ENCODE measurements at regions of chr12 and their contacts with region 1.

Region 1: DNA sequence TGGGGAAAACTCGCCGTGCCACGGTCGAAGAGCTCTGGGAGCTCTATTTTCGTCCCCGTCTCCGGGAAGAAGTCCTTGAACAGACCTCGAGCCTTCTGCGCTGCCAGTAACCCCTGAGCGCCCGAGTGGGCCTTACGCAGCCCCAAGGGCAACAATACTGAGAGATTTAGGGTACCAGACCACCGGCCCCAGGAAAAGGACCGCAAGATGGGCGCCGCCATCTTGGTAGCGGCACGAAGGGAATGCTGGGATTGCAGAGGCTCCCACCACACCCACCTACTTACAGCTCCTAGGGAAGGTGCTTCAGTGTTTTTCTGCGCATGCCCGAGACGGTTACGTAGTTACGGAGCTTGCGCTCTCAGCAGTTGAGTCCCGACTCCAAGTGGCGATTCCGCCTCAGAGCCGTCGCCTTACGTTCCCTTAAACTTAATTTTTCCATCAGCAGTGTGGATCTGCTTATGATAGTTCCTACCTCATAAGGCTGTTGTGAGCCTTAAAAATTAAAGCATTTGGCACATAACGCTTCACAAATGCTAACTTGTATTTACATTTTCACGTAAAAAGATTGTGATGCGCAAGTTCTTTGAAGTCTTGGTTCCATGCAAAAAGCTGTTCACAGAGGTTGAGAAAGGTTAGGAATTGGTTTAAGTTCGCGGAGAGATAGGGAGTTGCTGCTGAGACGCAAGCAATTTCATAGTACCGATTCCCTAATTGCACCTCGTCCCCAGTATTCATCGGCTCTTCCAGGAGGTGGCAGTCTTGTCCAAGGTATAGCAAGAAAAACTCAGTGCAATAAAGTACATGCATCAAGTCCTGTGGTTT is at the start of gene YARS2:
- DNase-seq: peak; percentile 83 to 88 (median 86)
- H3K4me3 ChIP-seq: peak within 1 kb of the TSS; percentile 76 to 93
- H3K4me3 Mint-ChIP-seq: peak within 1 kb of the TSS; percentile 87 to 95 (median 95)
- H3K27ac ChIP-seq: peak within 1 kb of the TSS; percentile 78
- H3K27ac Mint-ChIP-seq: peak within 1 kb of the TSS; percentile 83 to 97 (median 95)
- H3K4me1 ChIP-seq: peaks cover 16% of the 10 kb centered on the region
- H3K4me1 Mint-ChIP-seq: peaks cover 11 to 22% (median 17%) of the 10 kb centered on the region in 4 donors
- H3K27me3 ChIP-seq: no peaks in the 10 kb centered on the region
- H3K27me3 Mint-ChIP-seq: peaks cover 0 to 2% of the 10 kb centered on the region in 2 donors
- total RNA-seq, gene YARS2: 18.9 to 19.0 TPM

Region 2: GRCh38 chr12:31325877-31326631 is 1429.8 kb before region 1 on chr12 and contains the start of gene SINHCAF:
- CTCF ChIA-PET with region 1: no interaction called
- POLR2A ChIA-PET with region 1: interaction called, 6 read pairs
- intact Hi-C with region 1: loop called (anchors 5 kb)
- DNase-seq: peak; percentile 97 to 99 (median 98)
- H3K4me3 ChIP-seq: peak within 1 kb of the TSS; percentile 88 to 89
- H3K4me3 Mint-ChIP-seq: peak within 1 kb of the TSS; percentile 88 to 99 (median 97)
- H3K27ac ChIP-seq: peak within 1 kb of the TSS; percentile 87
- H3K27ac Mint-ChIP-seq: peak within 1 kb of the TSS; percentile 93 to 99 (median 98)
- H3K4me1 ChIP-seq: peaks cover 25% of the 10 kb centered on the region
- H3K4me1 Mint-ChIP-seq: peaks cover 21 to 44% (median 27%) of the 10 kb centered on the region in 4 donors
- H3K27me3 ChIP-seq: no peaks in the 10 kb centered on the region
- H3K27me3 Mint-ChIP-seq: peaks cover 0 to 2% of the 10 kb centered on the region in 2 donors
- total RNA-seq, gene SINHCAF: 95.8 to 98.5 TPM

Region 3: GRCh38 chr12:31650927-31651326 is 1104.9 kb before region 1 on chr12:
- CTCF ChIA-PET with region 1: interaction called, 38 read pairs
- POLR2A ChIA-PET with region 1: interaction called, 14 read pairs
- intact Hi-C with region 1: loop called (anchors 2 kb)
- DNase-seq: no peak
- H3K4me3 ChIP-seq: no peak overlapping the region
- H3K4me3 Mint-ChIP-seq: no peak overlapping the region
- H3K27ac ChIP-seq: no peak overlapping the region
- H3K27ac Mint-ChIP-seq: no peak overlapping the region
- H3K4me1 ChIP-seq: peaks cover 12% of the 10 kb centered on the region
- H3K4me1 Mint-ChIP-seq: peaks cover 6 to 12% (median 7%) of the 10 kb centered on the region in 4 donors
- H3K27me3 ChIP-seq: no peaks in the 10 kb centered on the region
- H3K27me3 Mint-ChIP-seq: peaks cover 0 to 2% of the 10 kb centered on the region in 2 donors

Region 4: DNA sequence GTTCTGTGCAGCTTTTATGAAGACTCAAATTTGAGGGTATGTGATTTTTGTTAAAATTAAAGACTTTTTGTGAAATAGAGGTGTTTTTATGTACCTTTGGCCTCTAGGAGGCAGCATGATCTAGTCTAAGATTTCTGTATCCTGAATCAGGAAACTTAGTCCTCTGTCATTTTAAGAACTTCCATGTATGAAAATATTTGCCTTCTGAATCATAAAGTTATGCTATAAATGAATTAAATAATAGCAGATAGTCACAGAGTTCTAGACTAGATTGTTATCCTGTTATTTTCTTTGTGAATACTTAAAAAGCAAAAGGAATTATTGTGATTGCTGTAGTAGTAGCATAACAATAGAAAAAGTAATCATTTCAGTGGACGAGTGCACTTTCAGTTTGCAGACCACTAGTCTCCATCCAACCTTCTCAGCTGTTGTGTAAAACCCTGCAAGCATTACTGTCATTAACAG is 300.2 kb before region 1 on chr12:
- CTCF ChIA-PET with region 1: interaction called, 13 read pairs
- POLR2A ChIA-PET with region 1: no interaction called
- intact Hi-C with region 1: loop called (anchors 5 kb)
- DNase-seq: peak in 4 of 5 donors; percentile 17 to 29 (median 28)
- H3K4me3 ChIP-seq: no peak overlapping the region
- H3K4me3 Mint-ChIP-seq: peak overlapping the region in 6 of 8 donors; percentile 15 to 49 (median 25)
- H3K27ac ChIP-seq: no peak overlapping the region
- H3K27ac Mint-ChIP-seq: no peak overlapping the region
- H3K4me1 ChIP-seq: no peaks in the 10 kb centered on the region
- H3K4me1 Mint-ChIP-seq: peaks cover 0 to 5% (median 2%) of the 10 kb centered on the region in 4 donors
- H3K27me3 ChIP-seq: no peaks in the 10 kb centered on the region
- H3K27me3 Mint-ChIP-seq: peaks cover 0 to 4% of the 10 kb centered on the region in 2 donors

Region 5: GRCh38 chr12:32734952-32735351 is 20.9 kb before region 1 on chr12:
- CTCF ChIA-PET with region 1: interaction called, 11 read pairs
- POLR2A ChIA-PET with region 1: interaction called, 3 read pairs
- intact Hi-C with region 1: no loop called
- DNase-seq: no peak
- H3K4me3 ChIP-seq: no peak overlapping the region
- H3K4me3 Mint-ChIP-seq: no peak overlapping the region
- H3K27ac ChIP-seq: no peak overlapping the region
- H3K27ac Mint-ChIP-seq: peak overlapping the region in 4 of 7 donors; percentile 0 to 69 (median 6)
- H3K4me1 ChIP-seq: no peaks in the 10 kb centered on the region
- H3K4me1 Mint-ChIP-seq: peaks cover 0 to 5% (median 2%) of the 10 kb centered on the region in 4 donors
- H3K27me3 ChIP-seq: no peaks in the 10 kb centered on the region
- H3K27me3 Mint-ChIP-seq: no peaks in the 10 kb centered on the region

Region 6: DNA sequence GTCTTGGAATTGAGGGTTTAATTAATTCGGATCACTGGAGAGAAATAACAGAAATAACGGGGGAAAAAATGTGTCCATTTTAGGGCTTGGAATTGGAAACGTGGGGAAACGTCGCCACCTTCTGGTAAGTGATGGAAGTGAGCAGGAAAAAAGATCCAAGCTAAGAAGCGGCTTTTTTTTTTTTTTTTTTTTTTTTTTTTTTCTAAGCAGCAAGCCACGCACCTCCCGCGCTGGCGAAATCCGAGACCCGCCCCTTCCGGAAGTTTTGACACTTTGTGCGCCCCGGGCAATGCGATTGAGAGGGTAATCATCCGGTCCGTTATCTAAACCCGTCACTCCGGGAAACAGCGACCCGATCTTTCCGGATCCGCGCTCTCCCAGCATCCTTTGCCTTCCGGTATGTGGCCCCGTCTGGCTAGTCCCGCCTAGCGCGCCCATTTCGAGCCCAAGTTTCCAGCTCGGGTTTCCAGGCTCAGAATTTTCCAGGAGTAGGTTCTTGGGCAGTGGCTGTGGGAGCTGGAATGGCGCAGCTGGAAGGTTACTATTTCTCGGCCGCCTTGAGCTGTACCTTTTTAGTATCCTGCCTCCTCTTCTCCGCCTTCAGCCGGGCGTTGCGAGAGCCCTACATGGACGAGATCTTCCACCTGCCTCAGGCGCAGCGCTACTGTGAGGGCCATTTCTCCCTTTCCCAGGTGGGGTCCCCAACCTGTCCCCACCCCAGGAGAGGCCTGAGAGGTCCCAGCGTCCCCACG is 1266.4 kb after region 1 on chr12 and contains the start of gene ALG10:
- CTCF ChIA-PET with region 1: interaction called, 125 read pairs
- POLR2A ChIA-PET with region 1: interaction called, 62 read pairs
- intact Hi-C with region 1: loop called (anchors 1 kb)
- DNase-seq: peak; percentile 95 to 98 (median 97)
- H3K4me3 ChIP-seq: peak within 1 kb of the TSS; percentile 82 to 83
- H3K4me3 Mint-ChIP-seq: peak within 1 kb of the TSS; percentile 92 to 97 (median 96)
- H3K27ac ChIP-seq: peak within 1 kb of the TSS; percentile 84
- H3K27ac Mint-ChIP-seq: peak within 1 kb of the TSS; percentile 96 to 99 (median 99)
- H3K4me1 ChIP-seq: peaks cover 19% of the 10 kb centered on the region
- H3K4me1 Mint-ChIP-seq: peaks cover 12 to 23% (median 16%) of the 10 kb centered on the region in 4 donors
- H3K27me3 ChIP-seq: no peaks in the 10 kb centered on the region
- H3K27me3 Mint-ChIP-seq: peaks cover 0 to 2% of the 10 kb centered on the region in 2 donors
- total RNA-seq, gene ALG10: 22.1 to 22.5 TPM

Region 7: GRCh38 chr12:34126239-34126641 is 1370.4 kb after region 1 on chr12:
- CTCF ChIA-PET with region 1: interaction called, 6 read pairs
- POLR2A ChIA-PET with region 1: no interaction called
- intact Hi-C with region 1: loop called (anchors 5 kb)
- DNase-seq: peak in 3 of 5 donors; percentile 9 to 30 (median 12)
- H3K4me3 ChIP-seq: peak overlapping the region; percentile 25 to 60
- H3K4me3 Mint-ChIP-seq: peak overlapping the region; percentile 71 to 88 (median 84)
- H3K27ac ChIP-seq: no peak overlapping the region
- H3K27ac Mint-ChIP-seq: peak overlapping the region in 6 of 7 donors; percentile 2 to 93 (median 81)
- H3K4me1 ChIP-seq: peaks cover 14% of the 10 kb centered on the region
- H3K4me1 Mint-ChIP-seq: peaks cover 12 to 19% (median 14%) of the 10 kb centered on the region in 4 donors
- H3K27me3 ChIP-seq: no peaks in the 10 kb centered on the region
- H3K27me3 Mint-ChIP-seq: peaks cover 4 to 5% of the 10 kb centered on the region in 2 donors